SK-N-SH (cell line): ENCODE measurements at regions of chrX and their contacts with region 1.

Region 1: DNA sequence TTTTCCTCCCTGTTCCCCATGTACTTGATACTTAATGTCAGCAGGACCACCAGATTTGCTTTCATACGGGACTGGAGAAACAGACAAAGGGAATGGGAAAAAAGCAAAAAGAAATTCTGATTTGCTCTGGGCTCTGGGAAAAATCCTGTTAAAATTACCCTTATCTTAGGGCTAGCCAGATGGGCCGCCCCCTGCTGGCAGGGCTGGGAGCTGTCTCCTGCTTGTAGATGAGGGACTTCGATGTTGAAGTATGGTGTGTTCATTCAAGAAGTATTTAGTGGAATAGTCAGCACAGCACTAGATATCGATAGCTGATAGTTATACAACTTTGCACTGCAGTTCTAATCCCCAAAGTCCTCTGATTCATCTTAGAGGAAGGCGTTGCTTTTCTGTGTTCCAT is 45.8 kb downstream of the BCORL1 start:
- DNase-seq: peak; percentile 49
- H3K4me3 ChIP-seq: no peak overlapping the region
- H3K27ac ChIP-seq: no peak overlapping the region
- H3K4me1 ChIP-seq: no peaks in the 10 kb centered on the region
- H3K27me3 ChIP-seq: peaks cover 30% of the 10 kb centered on the region; the same call in 1 of the 2 replicates
- CTCF ChIP-seq: peak; percentile 77
- EP300 ChIP-seq: no peak
- RAD21 ChIP-seq: peak; percentile 37; the same call in 1 of the 2 replicates

Region 2: DNA sequence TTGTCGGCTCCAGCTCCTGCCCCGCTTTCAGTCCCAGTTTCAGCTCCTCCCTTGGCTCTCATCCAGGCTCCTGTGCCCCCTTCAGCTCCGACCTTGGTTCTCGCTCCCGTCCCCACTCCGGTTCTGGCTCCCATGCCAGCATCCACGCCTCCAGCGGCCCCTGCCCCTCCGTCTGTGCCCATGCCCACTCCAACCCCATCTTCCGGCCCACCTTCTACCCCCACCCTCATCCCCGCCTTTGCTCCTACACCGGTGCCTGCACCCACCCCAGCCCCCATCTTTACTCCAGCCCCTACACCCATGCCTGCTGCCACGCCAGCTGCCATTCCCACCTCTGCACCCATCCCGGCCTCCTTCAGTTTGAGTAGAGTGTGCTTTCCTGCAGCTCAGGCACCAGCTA is 14.5 kb before region 1 on chrX:
- CTCF ChIA-PET with region 1: interaction called, 12 read pairs
- POLR2A ChIA-PET with region 1: no interaction called
- DNase-seq: no peak
- H3K4me3 ChIP-seq: no peak overlapping the region
- H3K27ac ChIP-seq: no peak overlapping the region
- H3K4me1 ChIP-seq: no peaks in the 10 kb centered on the region
- H3K27me3 ChIP-seq: peaks cover 38% of the 10 kb centered on the region; the same call in 1 of the 2 replicates
- CTCF ChIP-seq: no peak
- EP300 ChIP-seq: no peak
- RAD21 ChIP-seq: no peak

Region 3: DNA sequence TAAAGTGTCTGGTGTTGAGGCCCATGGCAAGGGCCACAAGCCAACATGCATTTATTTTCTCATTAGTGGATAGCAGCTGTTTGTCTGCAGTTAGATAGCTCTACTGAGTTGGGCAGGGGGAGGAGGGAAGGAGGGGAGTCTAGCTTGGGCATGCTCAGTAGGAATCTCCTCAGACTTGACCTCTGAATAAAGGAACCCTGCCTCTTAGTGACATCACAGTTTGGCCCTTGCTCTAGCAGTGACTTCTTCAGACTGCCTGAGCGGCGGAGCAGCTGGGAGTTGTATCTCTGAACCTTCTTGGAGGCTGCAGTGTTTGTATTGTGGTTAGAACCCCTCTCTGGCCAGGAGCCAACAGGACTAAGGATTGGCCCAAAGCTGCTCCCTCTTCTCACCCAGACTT is 11.7 kb after region 1 on chrX:
- CTCF ChIA-PET with region 1: interaction called, 27 read pairs
- POLR2A ChIA-PET with region 1: no interaction called
- DNase-seq: no peak
- H3K4me3 ChIP-seq: no peak overlapping the region
- H3K27ac ChIP-seq: no peak overlapping the region
- H3K4me1 ChIP-seq: no peaks in the 10 kb centered on the region
- H3K27me3 ChIP-seq: peaks cover 6% of the 10 kb centered on the region
- CTCF ChIP-seq: no peak
- EP300 ChIP-seq: no peak
- RAD21 ChIP-seq: no peak